CD14-positive monocyte (primary cell): ENCODE measurements at regions of chr17 and their contacts with region 1.

Region 1: DNA sequence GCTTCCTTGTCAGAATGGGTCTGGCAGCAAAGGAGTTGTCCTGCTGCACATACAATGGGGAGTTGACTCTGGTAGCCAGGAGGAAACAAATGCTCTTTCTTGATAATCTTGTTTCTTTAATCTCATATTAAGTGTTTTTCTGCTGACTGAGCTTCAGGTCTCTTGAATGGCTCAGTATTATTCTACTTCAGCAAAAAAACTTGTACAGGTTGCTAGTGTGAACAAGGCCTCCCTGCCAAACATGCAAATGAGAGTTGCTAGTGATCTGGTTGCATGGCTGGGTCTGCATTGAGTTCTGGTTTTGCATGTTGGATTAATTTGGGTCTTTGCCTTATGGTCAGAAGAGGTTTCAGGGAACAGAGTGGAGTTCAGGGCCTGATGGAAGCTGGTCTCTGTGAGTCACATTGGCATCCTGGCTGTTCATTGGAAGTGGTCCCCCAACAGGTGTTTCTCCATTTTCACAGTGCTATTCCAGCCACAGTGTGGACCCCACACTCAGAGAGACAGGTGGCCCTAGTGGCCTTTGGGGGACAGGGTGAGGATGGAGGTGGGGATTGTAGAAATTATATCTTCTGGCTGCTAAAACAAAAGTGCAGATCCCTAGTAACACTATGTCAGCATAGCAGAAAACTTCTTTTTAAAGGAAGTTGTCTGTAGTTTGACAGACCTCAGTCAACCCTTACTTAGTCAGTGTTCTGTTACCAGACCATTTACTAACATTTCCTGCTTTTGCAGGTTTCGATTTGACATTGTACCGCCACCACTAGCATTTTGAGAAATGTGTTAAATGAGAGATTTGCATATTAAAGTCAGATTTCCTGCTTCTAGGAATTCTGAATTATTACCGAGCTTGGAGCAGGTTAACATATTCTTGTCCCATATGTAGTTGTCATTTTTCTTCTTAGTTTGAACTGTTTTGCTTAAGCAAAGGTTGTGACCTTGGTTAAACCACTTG is 47.1 kb downstream of the EPN2 start:
- DNase-seq: no peak
- H3K4me3 ChIP-seq: no peak overlapping the region
- H3K4me3 Mint-ChIP-seq: no peak overlapping the region
- H3K27ac ChIP-seq: no peak overlapping the region
- H3K27ac Mint-ChIP-seq: no peak overlapping the region
- H3K4me1 ChIP-seq: no peaks in the 10 kb centered on the region
- H3K4me1 Mint-ChIP-seq: peaks cover 8% of the 10 kb centered on the region
- H3K27me3 ChIP-seq: peaks cover 2 to 20% of the 10 kb centered on the region in 2 donors
- H3K27me3 Mint-ChIP-seq: peaks cover 36 to 54% (median 54%) of the 10 kb centered on the region in 3 donors
- CTCF ChIP-seq: no peak

Region 2: DNA sequence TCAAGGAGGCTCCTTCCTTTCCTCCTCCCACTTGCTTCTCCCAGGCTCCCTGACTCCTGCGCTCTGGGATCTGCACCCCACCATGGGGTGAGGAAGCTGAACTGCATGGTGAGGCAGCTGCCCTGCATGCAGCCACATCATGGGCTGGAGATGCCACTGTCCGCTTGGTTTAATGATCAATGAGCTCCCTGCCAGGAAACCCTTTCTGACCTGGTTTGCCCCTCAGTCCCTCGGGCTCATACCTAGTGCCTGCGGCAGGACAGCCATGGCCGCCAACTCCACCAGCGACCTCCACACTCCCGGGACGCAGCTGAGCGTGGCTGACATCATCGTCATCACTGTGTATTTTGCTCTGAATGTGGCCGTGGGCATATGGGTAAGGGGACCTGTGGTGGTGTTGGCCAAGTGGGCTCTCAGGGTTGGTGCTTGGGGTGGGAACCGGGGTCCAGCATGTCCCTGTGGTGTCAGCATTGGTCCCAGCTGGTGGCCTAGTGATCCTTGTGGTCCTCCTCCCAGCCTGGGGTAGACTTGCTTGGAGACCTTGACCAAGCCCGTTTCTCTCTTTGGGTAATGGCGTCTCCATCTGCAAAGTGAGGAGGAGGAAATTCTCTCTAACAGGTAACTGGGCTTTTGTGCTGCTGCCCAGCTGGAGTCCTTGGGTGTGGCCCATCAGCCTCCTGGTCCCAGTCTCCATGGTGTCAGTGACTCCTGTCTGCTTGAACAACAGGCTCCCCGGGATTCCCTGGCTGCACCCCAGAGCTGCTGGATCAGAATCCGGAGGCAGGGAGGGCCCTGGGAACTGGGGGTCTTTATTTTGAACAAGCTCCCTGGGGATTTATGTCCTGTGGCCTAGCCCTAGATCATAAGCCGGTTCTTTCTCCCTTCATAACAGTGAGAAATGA is 332.1 kb before region 1 on chr17 and contains the start of gene SLC5A10:
- intact Hi-C with region 1: no loop called
- DNase-seq: no peak
- H3K4me3 ChIP-seq: no peak within 1 kb of the TSS
- H3K4me3 Mint-ChIP-seq: no peak within 1 kb of the TSS
- H3K27ac ChIP-seq: no peak within 1 kb of the TSS
- H3K27ac Mint-ChIP-seq: no peak within 1 kb of the TSS
- H3K4me1 ChIP-seq: no peaks in the 10 kb centered on the region
- H3K4me1 Mint-ChIP-seq: peaks cover 3% of the 10 kb centered on the region
- H3K27me3 ChIP-seq: no peaks in the 10 kb centered on the region
- H3K27me3 Mint-ChIP-seq: peaks cover 3 to 5% (median 3%) of the 10 kb centered on the region in 3 donors
- CTCF ChIP-seq: no peak
- polyA plus RNA-seq, gene SLC5A10: 0.10 to 0.17 (median 0.12) TPM

Region 3: DNA sequence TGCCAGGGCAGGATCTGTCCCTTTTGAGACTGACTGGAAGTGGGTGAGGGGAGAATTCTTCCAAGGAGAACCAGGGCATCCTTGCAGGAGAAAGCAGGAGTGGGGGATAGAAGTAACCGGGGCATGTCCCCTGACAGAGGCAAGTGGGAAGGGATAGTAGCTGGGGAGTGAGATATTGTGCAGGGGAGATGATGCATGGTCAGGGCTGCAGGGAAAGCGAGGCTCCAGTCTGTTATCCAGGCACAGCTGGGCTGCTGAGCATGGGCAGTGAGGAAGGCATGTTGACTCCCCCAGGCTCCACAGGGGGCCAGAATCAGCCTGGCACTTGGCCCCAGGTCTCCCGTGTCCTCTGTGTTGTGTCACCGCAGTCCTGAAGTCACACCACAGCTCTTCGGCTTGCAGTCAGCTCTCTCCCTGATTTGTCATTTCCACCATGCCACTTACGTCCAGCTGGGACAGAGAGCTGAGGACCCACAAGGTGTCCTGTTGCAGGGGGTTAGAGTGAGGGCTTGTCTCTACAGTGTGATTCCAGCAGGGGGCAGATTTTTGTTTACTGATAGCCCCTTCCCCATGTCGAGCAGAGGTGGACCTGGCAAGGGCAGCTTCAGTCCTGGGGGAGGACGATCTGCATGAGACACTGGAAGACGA is 37.3 kb after region 1 on chr17:
- intact Hi-C with region 1: loop called in 1 of 2 experiments (anchors 5 kb)
- DNase-seq: no peak
- H3K4me3 ChIP-seq: no peak overlapping the region
- H3K4me3 Mint-ChIP-seq: peak overlapping the region in 1 of 2 donors; percentile 64
- H3K27ac ChIP-seq: no peak overlapping the region
- H3K27ac Mint-ChIP-seq: peak overlapping the region in 2 of 7 donors; percentile 4 to 55
- H3K4me1 ChIP-seq: no peaks in the 10 kb centered on the region
- H3K4me1 Mint-ChIP-seq: no peaks in the 10 kb centered on the region
- H3K27me3 ChIP-seq: peaks cover 26 to 81% of the 10 kb centered on the region in 2 donors
- H3K27me3 Mint-ChIP-seq: peaks cover 61 to 84% (median 84%) of the 10 kb centered on the region in 3 donors
- CTCF ChIP-seq: no peak